ENCODE measurements at regions of chr22 and their contacts with region 1.

Region 1: GRCh38 chr22:38317122-38317994 is at the start of gene CSNK1E:
- DNase-seq: no peak
- H3K4me3 ChIP-seq: peak within 1 kb of the TSS; percentile 86 to 97 (median 94)
- H3K27ac ChIP-seq: peak within 1 kb of the TSS; percentile 98 to 100 (median 99)
- H3K4me1 ChIP-seq: peaks cover 43 to 54% (median 51%) of the 10 kb centered on the region in 4 donors
- H3K27me3 ChIP-seq: no peaks in the 10 kb centered on the region
- CTCF ChIP-seq: no peak
- EP300 ChIP-seq: no peak
- POLR2A ChIP-seq: no peak
- total RNA-seq, gene CSNK1E: 67.9 to 102 (median 91.7) TPM

Region 2: GRCh38 chr22:38201710-38202436 is 115.5 kb before region 1 on chr22 and contains the start of gene MAFF:
- intact Hi-C with region 1: loop called (anchors 5 kb)
- DNase-seq: peak; percentile 100
- H3K4me3 ChIP-seq: peak within 1 kb of the TSS; percentile 73 to 92 (median 85)
- H3K27ac ChIP-seq: peak within 1 kb of the TSS; percentile 93 to 100 (median 99)
- H3K4me1 ChIP-seq: peaks cover 24 to 42% (median 42%) of the 10 kb centered on the region in 4 donors
- H3K27me3 ChIP-seq: peaks cover 0 to 10% (median 0%) of the 10 kb centered on the region in 4 donors
- CTCF ChIP-seq: no peak
- EP300 ChIP-seq: peak; percentile 46
- POLR2A ChIP-seq: peak; percentile 96
- total RNA-seq, gene MAFF: 26.2 to 182 (median 54.3) TPM

Region 3: DNA sequence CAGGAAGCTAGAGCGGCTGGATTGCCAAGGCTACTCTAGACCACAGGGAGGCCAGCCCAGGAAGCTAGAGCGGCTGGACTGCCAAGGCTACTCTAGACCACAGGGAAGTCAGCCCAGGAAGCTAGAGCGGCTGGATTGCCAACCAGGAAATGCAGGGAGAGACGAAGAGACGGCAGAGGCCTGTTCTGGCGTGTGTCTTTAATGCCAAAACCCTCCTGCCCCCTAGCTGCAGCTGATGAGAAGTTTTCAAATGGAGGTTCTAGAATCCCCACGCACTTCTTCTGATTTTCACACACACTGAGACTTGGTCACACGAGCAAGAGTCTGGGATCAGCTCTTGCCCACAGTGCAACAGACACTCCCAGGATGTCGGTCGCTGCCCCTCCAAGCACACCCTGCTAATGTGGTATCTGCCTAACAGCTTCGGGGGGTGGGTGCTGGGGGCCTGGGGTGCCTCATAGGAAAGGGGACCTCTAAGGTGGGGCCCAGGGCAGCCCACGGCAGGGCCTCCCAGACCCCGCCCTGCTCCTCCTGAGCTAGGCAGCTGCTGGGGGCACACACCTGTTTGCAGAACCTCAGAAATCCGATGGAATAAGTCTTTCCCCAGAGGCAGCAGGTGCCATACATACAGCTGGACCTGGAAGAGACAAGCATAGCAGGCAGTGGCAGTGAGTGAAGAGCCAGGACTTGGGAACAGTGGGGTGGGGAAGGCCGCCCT is 87.1 kb before region 1 on chr22:
- intact Hi-C with region 1: no loop called
- DNase-seq: no peak
- H3K4me3 ChIP-seq: no peak overlapping the region
- H3K27ac ChIP-seq: peak overlapping the region; percentile 28 to 64 (median 47)
- H3K4me1 ChIP-seq: peaks cover 30 to 44% (median 39%) of the 10 kb centered on the region in 4 donors
- H3K27me3 ChIP-seq: no peaks in the 10 kb centered on the region
- CTCF ChIP-seq: peak; percentile 26 to 48 (median 39)
- EP300 ChIP-seq: no peak
- POLR2A ChIP-seq: no peak

Region 4: GRCh38 chr22:38272373-38273134 is 44.8 kb before region 1 on chr22 and contains the start of gene TMEM184B:
- intact Hi-C with region 1: loop called (anchors 5 kb)
- DNase-seq: no peak
- H3K4me3 ChIP-seq: peak within 1 kb of the TSS; percentile 88 to 99 (median 98)
- H3K27ac ChIP-seq: peak within 1 kb of the TSS; percentile 94 to 96 (median 94)
- H3K4me1 ChIP-seq: peaks cover 49 to 60% (median 55%) of the 10 kb centered on the region in 4 donors
- H3K27me3 ChIP-seq: no peaks in the 10 kb centered on the region
- CTCF ChIP-seq: peak in 1 of 3 experiments; percentile 28
- EP300 ChIP-seq: no peak
- POLR2A ChIP-seq: peak; percentile 60
- total RNA-seq, gene TMEM184B: 39.4 to 108 (median 75.3) TPM

Region 5: GRCh38 chr22:38755911-38756532 is 438.7 kb after region 1 on chr22 and contains the start of gene SUN2:
- intact Hi-C with region 1: no loop called
- DNase-seq: peak; percentile 99
- H3K4me3 ChIP-seq: peak within 1 kb of the TSS; percentile 70 to 82 (median 78)
- H3K27ac ChIP-seq: peak within 1 kb of the TSS; percentile 91 to 100 (median 98)
- H3K4me1 ChIP-seq: peaks cover 31 to 58% (median 50%) of the 10 kb centered on the region in 4 donors
- H3K27me3 ChIP-seq: no peaks in the 10 kb centered on the region
- CTCF ChIP-seq: no peak
- EP300 ChIP-seq: no peak
- POLR2A ChIP-seq: peak; percentile 67
- total RNA-seq, gene SUN2: 417 to 598 (median 449) TPM

Measured in esophagus muscularis mucosa (tissue), 4 donors.